Cardiac septum (tissue), 1 donor: ENCODE measurements at regions of chr10 and their contacts with region 1.

Region 1: DNA sequence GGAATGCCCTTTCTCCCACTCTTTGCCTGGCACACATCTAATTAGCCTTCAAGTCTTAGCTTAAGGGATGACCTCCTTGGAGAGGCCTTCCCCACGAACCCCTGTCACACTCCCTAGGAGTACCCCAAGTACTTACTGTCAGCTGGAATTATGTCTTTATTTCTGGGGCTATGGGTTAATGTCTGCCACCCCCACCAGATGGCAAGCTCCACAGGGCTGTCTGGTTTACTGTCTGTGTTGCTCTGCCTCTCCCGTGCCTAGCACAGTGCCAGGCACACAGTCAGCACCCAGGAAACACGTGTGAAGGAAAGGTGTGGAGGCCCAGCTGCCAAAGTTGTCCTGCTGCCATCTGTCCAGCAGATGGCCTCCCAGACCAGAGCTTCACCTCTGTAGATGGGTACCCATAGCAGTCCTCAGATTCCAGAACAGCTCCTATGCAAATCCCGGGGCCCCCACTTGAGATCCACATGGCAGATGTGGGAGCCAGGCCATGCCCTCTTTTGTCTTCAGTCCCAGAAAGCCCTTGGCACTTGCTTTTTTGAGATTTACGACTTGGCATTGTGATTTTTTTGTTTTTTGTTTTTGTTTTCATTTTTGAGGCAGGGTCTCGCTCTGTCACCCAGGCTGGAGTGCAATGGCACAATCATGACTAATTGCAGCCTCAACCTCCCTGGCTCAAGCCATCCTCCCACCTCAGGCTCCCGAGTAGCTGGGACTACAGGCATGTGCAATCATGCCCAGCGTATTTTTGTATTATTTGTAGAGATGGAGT is 17.2 kb upstream of the PALD1 start:
- DNase-seq: no peak

Region 2: GRCh38 chr10:70432101-70432500 is 29.3 kb before region 1 on chr10:
- intact Hi-C with region 1: loop called (anchors 2 kb)
- DNase-seq: no peak

Region 3: GRCh38 chr10:70540089-70540788 is 78.8 kb after region 1 on chr10:
- intact Hi-C with region 1: loop called (anchors 1 kb)
- DNase-seq: no peak

Region 4: GRCh38 chr10:70758757-70759514 is 297.5 kb after region 1 on chr10:
- intact Hi-C with region 1: loop called (anchors 5 kb)
- DNase-seq: no peak

Region 5: DNA sequence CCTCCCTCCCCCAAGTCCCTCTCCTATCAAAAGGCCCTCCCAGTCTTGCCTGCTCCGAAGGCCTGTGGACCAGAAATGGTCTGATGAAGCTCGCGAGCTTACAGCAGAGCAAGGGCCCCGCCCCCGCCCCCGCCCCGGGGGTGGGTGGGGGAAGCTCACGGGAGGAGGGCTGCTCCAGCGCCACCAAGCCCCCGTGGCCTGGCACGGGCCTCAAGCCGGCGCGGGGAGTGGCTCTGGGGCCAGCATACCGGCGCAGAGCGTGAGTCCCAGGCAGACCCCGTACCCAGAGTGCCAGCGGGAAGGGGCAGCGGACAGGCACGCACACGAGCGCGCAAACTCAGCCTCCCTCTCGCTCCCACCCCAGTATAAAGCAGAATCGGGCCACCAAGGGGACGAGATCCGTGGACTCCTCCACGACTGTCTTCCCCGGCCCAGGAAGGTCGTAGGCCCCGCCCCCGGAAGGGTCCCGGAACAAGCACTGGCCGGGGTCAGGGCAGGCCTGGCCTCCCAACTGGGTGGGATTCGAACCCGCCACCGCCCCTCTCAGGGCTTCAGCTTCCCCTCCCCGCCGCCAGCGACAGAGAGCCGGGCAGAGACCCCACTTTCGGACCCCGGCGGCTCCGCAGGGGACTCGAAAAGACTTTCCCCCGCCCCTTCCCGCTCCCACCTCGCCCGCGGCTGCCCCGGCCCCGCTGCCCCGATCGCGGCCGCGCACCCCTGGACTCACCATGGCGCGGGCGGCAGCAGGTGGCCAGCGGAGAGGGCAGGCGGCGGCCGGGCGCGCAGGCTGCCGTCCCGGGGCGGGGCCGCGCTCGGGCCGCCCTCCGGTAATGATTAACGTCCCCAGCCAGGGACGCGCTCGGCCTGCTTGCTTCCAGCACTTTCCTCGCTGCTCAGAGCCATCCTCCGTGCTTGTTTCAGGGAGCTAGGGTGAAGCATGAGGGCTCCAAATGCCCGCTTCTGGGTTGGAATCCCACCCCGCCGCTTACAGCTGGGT is 426.7 kb after region 1 on chr10 and contains the start of gene PCBD1:
- intact Hi-C with region 1: loop called (anchors 5 kb)
- DNase-seq: peak; percentile 88
- total RNA-seq, gene PCBD1: 121 TPM